ENCODE measurements at regions of chr17 and their contacts with region 1.

Region 1: GRCh38 chr17:40355123-40355803 is 9.3 kb downstream of the GJD3 start:
- DNase-seq: peak; percentile 87
- ATAC-seq: peak; percentile 71
- H3K4me3 Mint-ChIP-seq: no peak overlapping the region
- H3K27ac Mint-ChIP-seq: no peak overlapping the region
- H3K4me1 Mint-ChIP-seq: peaks cover 18% of the 10 kb centered on the region
- H3K27me3 Mint-ChIP-seq: peaks cover 3% of the 10 kb centered on the region

Region 2: GRCh38 chr17:40062329-40063186 is 292.7 kb before region 1 on chr17 and contains the start of gene THRA:
- CTCF ChIA-PET with region 1: no interaction called
- POLR2A ChIA-PET with region 1: no interaction called
- intact Hi-C with region 1: no loop called
- DNase-seq: peak; percentile 82
- ATAC-seq: peak; percentile 84
- H3K4me3 Mint-ChIP-seq: peak within 1 kb of the TSS; percentile 77
- H3K27ac Mint-ChIP-seq: peak within 1 kb of the TSS; percentile 74
- H3K4me1 Mint-ChIP-seq: peaks cover 45% of the 10 kb centered on the region
- H3K27me3 Mint-ChIP-seq: no peaks in the 10 kb centered on the region
- total RNA-seq, gene THRA: 12.9 to 13.1 TPM

Region 3: GRCh38 chr17:40203131-40203530 is 152.1 kb before region 1 on chr17:
- CTCF ChIA-PET with region 1: interaction called, 3 read pairs
- POLR2A ChIA-PET with region 1: no interaction called
- intact Hi-C with region 1: loop called (anchors 1 to 2 kb)
- DNase-seq: no peak
- ATAC-seq: no peak
- H3K4me3 Mint-ChIP-seq: no peak overlapping the region
- H3K27ac Mint-ChIP-seq: no peak overlapping the region
- H3K4me1 Mint-ChIP-seq: peaks cover 5% of the 10 kb centered on the region
- H3K27me3 Mint-ChIP-seq: peaks cover 2% of the 10 kb centered on the region

Region 4: GRCh38 chr17:40303009-40303657 is 52.1 kb before region 1 on chr17:
- CTCF ChIA-PET with region 1: interaction called, 125 read pairs
- POLR2A ChIA-PET with region 1: interaction called, 4 read pairs
- intact Hi-C with region 1: loop called (anchors 1 kb)
- DNase-seq: peak; percentile 53
- ATAC-seq: no peak
- H3K4me3 Mint-ChIP-seq: no peak overlapping the region
- H3K27ac Mint-ChIP-seq: peak overlapping the region; percentile 59
- H3K4me1 Mint-ChIP-seq: peaks cover 16% of the 10 kb centered on the region
- H3K27me3 Mint-ChIP-seq: no peaks in the 10 kb centered on the region

Region 5: DNA sequence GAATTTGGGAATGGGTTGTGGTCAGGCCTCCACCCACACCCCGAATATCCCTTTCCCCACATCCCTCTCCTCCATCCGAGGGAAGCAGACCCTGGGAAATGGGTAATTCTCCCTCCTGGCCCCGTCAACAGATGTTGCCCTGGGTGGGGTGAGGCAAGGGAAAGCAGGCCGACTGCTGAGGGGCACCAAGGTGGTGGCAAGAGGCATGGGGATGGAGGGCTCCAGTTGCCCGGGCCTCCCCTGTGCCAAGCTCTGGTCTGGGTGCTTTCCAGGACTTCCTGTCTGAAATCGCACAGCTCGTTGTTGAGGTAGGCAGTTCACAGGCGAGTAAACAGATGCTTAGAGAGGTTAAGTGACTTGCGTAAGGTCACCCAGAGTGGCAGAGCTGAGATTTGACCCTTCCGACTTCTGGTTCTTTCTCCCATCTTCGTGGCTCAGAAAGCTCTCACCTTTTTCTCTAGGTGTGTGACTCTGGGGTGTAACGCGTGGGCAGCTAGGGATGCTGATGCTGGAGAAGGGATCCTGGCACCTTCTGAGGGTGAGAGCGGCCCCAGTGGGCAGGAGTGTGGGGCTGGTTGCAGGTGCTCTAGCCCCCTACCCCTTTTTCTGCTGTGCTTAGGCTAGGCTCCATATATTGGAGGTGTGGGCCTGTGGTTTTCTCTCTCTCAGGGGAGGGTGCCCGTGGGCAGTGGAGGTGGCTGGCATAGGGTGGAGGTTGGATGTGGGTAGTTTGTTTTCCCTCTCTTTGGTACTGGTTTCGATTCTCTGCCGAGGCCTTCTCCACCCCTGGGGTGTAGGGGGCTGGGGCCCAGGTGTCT is 29.0 kb before region 1 on chr17:
- CTCF ChIA-PET with region 1: interaction called, 11 read pairs
- POLR2A ChIA-PET with region 1: interaction called, 4 read pairs
- intact Hi-C with region 1: no loop called
- DNase-seq: peak; percentile 76
- ATAC-seq: peak; percentile 40
- H3K4me3 Mint-ChIP-seq: peak overlapping the region; percentile 64
- H3K27ac Mint-ChIP-seq: peak overlapping the region; percentile 84
- H3K4me1 Mint-ChIP-seq: peaks cover 95% of the 10 kb centered on the region
- H3K27me3 Mint-ChIP-seq: no peaks in the 10 kb centered on the region

Region 6: GRCh38 chr17:40371261-40371929 is 16.1 kb after region 1 on chr17:
- CTCF ChIA-PET with region 1: interaction called, 12 read pairs
- POLR2A ChIA-PET with region 1: interaction called, 3 read pairs
- intact Hi-C with region 1: no loop called
- DNase-seq: peak; percentile 57
- ATAC-seq: peak; percentile 75
- H3K4me3 Mint-ChIP-seq: no peak overlapping the region
- H3K27ac Mint-ChIP-seq: no peak overlapping the region
- H3K4me1 Mint-ChIP-seq: peaks cover 33% of the 10 kb centered on the region
- H3K27me3 Mint-ChIP-seq: no peaks in the 10 kb centered on the region

Region 7: GRCh38 chr17:40427002-40427491 is 71.8 kb after region 1 on chr17:
- CTCF ChIA-PET with region 1: no interaction called
- POLR2A ChIA-PET with region 1: no interaction called
- intact Hi-C with region 1: no loop called
- DNase-seq: no peak
- ATAC-seq: peak; percentile 90
- H3K4me3 Mint-ChIP-seq: no peak overlapping the region
- H3K27ac Mint-ChIP-seq: no peak overlapping the region
- H3K4me1 Mint-ChIP-seq: peaks cover 31% of the 10 kb centered on the region
- H3K27me3 Mint-ChIP-seq: no peaks in the 10 kb centered on the region